ENCODE measurements at regions of chr5 and their contacts with region 1.

Region 1: DNA sequence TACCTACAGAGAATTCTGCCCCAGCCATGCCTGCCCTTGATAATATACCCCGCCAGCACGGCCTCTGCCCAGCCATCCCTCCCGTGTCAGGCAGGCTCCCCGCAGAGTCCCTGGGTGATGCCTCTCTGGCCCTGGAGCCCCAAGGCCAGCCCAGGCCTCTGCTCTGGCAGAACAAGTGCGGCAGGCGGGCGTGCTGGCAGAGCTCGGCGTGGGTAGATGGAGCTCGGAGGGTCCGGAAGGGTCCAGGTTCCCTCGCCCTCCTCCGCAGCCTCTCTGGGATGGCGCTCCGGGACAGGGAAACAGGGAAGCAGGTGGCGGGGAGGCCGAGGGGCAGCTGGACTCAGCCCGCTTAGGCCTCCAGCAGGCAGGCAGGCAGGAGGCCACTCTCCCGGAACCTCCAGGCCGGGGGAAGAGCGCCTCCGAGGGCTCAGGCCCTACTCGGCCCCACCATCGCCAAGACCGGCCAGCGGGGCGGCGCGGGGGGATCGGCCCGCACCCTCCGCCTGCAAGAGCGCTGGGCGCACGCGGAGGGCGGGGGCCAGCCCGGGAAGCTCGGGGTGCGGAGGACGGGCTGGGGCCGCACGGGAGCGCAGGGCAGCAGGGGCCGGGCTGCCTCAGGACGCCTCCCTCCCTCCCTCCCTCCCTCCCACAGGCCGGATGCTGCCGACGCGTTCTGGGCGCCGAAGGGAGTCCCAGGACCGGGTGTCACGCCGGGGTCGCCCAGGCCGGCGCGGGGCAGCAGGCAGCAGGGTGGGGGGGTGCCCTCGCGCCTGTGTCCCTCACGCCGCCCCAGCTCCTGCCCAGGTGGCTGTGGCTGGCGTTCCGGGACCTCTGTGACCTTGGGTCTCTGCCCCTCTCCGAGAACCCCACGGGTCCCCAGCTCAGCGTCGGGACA is 1.1 kb downstream of the MGAT4B start:
- DNase-seq: peak; percentile 57
- H3K27ac ChIP-seq: peak overlapping the region; percentile 92
- CTCF ChIP-seq: no peak

Region 2: GRCh38 chr5:179818746-179819295 is 13.2 kb after region 1 on chr5:
- CTCF ChIA-PET with region 1: interaction called, 3 read pairs
- POLR2A ChIA-PET with region 1: interaction called, 12 read pairs
- DNase-seq: peak; percentile 97
- H3K27ac ChIP-seq: peak overlapping the region; percentile 95
- CTCF ChIP-seq: no peak